ENCODE measurements at regions of chr12 and their contacts with region 1.

Region 1: DNA sequence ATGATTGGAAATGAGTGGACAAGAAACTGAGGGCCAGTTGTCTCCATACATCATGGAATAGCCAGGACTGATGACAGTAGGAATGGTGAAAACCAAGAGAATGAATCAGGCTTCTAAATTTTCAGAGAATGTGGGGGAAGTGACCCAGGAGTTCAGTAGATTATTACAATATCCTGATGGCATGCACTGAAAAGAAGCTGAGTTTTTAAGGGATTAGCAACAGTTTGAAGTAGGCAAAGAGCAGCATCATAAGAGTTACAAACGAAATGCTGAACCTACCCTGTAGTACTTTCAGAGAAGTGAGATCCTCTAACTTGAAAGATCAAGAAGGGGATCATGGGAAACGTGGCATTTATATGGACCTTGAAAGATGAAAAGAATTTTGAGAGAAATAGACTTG is 13.2 kb downstream of the SLC2A14 start:
- DNase-seq: no peak
- H3K4me3 ChIP-seq: no peak overlapping the region
- H3K27ac ChIP-seq: no peak overlapping the region
- H3K4me1 ChIP-seq: peaks cover 2% of the 10 kb centered on the region
- H3K27me3 ChIP-seq: no peaks in the 10 kb centered on the region
- CTCF ChIP-seq: no peak
- EP300 ChIP-seq: no peak
- POLR2A ChIP-seq: no peak

Region 2: DNA sequence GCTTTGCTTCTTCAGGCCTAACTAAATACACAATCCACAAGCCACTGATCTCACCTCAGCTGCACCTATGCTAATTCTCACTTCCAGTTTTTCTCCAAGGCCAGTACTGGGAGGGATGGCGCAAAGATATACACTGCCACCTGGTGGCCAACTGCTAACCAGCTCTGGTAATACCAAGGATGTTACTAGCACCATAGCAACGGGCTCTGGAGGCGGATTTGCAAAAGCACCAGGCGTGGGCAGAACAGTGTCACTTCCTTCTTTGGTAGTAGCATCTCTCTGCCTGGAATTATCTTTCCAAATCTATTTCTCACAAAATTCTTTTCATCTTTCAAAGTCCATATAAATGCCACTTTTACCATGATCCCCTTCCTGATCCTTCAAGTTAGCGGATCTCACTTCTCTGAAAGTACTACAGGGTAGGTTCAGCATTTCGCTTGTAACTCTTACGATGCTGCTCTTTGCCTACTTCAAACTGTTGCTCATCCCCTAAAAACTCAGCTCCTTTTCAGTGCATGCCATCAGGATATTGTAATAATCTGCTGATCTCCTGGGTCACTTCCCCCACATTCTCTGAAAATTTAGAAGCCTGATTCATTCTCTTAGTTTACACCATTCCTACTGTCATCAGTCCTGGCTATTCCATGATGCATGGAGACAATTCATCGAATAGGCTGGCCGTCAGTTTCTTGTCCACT is 135.9 kb after region 1 on chr12:
- intact Hi-C with region 1: loop called in 2 of 4 experiments (anchors 1 to 5 kb)
- DNase-seq: peak; percentile 63 to 83 (median 76)
- H3K4me3 ChIP-seq: no peak overlapping the region
- H3K27ac ChIP-seq: no peak overlapping the region
- H3K4me1 ChIP-seq: no peaks in the 10 kb centered on the region
- H3K27me3 ChIP-seq: no peaks in the 10 kb centered on the region
- CTCF ChIP-seq: peak; percentile 80 to 91 (median 81)
- EP300 ChIP-seq: no peak
- POLR2A ChIP-seq: no peak

Measured in ovary (tissue), 10 donors.